Breast epithelium (tissue), 4 donors: ENCODE measurements at regions of chr15 and their contacts with region 1.

Region 1: GRCh38 chr15:94692670-94693069 is 461.3 kb downstream of the MCTP2 start:
- DNase-seq: no peak
- H3K4me3 ChIP-seq: no peak overlapping the region
- H3K27ac ChIP-seq: no peak overlapping the region
- H3K4me1 ChIP-seq: no peaks in the 10 kb centered on the region
- H3K27me3 ChIP-seq: no peaks in the 10 kb centered on the region
- CTCF ChIP-seq: no peak
- POLR2A ChIP-seq: no peak

Region 2: GRCh38 chr15:94620632-94621031 is 72.0 kb before region 1 on chr15:
- intact Hi-C with region 1: loop called (anchors 2 kb)
- DNase-seq: no peak
- H3K4me3 ChIP-seq: no peak overlapping the region
- H3K27ac ChIP-seq: no peak overlapping the region
- H3K4me1 ChIP-seq: no peaks in the 10 kb centered on the region
- H3K27me3 ChIP-seq: no peaks in the 10 kb centered on the region
- CTCF ChIP-seq: no peak
- POLR2A ChIP-seq: no peak

Region 3: GRCh38 chr15:94761574-94761973 is 68.9 kb after region 1 on chr15:
- intact Hi-C with region 1: no loop called
- DNase-seq: no peak
- H3K4me3 ChIP-seq: no peak overlapping the region
- H3K27ac ChIP-seq: no peak overlapping the region
- H3K4me1 ChIP-seq: no peaks in the 10 kb centered on the region
- H3K27me3 ChIP-seq: no peaks in the 10 kb centered on the region
- CTCF ChIP-seq: no peak
- POLR2A ChIP-seq: no peak